ENCODE measurements at regions of chr11 and their contacts with region 1.

Region 1: GRCh38 chr11:102293873-102294601 is 23.2 kb upstream of the BIRC3 start:
- DNase-seq: peak; percentile 64
- CTCF ChIP-seq: peak; percentile 81

Region 2: DNA sequence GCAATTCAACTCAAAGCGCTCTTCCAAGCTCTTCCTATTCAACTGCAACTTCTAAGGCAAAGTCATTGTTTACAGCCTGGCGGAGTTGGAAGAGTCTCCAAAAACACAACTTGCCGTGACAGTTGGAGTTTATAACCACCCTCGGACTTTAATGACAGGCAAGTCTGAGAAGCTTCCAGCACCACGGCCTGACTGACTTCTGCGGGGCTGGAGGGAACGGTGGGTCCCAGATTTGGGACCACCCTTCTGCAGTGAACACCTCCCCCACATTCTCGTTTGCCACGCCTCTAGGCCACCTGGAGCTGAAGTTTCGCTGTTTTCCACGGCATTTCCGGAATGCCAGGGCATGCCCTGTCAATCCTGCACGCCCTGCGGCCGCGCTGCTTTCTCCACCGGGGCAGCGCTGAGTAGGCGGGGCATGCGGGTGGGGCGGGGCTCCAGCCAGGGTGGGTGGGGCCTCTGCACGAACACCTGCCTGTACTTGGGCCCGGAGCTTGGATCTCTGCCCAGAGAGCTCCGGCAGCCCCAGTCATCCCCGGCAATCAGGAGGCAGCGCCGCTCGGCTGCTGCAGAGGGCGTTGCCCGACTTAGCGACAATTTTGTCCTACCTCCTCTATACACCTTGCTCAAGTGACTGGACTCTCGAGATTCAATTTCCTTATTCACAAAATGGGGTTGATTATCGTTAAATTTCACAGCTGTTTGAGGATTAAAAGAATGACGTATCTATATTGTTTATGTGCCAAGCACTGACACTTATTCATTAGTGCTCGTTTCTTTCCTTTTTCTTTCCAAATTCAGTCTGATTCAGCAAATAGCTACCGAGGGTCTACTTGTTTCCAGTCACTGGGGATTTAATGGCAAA is 25.5 kb before region 1 on chr11:
- CTCF ChIA-PET with region 1: interaction called, 26 read pairs
- POLR2A ChIA-PET with region 1: no interaction called
- DNase-seq: peak; percentile 91
- CTCF ChIP-seq: peak; percentile 51

Region 3: DNA sequence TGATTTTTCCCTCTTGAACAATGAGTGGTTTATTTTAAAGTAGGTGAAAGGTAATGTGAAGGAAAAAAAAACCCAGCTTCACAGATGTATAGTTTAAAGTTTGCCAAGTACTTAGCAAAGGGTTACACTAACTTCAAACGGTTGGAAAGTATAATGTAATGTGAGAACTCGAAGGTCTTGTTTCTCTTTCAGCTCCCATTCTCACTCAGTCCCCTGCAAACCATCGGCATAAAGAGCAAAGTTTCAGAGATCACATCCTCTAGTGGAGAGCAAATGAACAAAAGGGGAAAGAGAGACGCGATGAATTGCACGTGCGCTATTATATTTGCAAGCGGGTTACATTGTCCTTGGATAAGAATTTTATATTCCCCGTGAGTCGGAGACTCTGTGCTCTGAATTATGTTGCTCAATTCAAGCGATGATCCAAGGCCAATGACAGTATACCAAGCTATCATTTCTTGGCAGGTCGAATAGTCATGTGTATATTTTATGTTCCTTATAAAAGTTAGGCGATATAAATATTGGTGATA is 14.3 kb before region 1 on chr11:
- CTCF ChIA-PET with region 1: interaction called, 25 read pairs
- POLR2A ChIA-PET with region 1: no interaction called
- DNase-seq: peak; percentile 60
- CTCF ChIP-seq: peak; percentile 0

Region 4: GRCh38 chr11:102306048-102306585 is 12.1 kb after region 1 on chr11:
- CTCF ChIA-PET with region 1: interaction called, 90 read pairs
- POLR2A ChIA-PET with region 1: no interaction called
- DNase-seq: no peak
- CTCF ChIP-seq: no peak

Region 5: DNA sequence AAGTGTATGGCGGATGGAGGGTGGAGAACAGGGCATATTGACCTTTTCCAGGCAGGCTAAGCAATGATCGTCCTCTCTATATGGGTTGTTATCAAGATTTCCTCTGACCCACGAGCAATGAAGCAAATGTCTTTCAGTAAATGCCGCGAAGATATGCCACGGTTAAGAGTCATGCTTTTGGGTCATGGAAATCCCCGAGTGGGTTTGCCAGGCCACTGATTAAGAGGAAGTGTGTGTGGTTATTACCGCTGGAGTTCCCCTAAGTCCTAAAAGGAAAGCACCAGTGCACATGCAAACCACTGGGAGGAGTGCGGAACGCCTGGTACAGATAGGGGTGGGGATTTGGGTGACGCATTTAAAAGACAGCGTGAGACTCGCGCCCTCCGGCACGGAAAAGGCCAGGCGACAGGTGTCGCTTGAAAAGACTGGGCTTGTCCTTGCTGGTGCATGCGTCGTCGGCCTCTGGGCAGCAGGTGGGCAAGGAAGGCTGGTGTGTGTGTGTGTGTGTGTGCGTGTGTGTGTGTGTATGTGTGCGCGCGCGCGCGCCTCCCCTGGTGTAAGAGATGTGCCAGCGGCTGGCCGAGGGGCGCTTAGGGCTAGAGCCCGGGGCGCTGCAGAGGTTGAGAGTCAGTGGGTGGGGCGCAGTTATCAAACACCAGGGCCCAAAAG is 23.2 kb after region 1 on chr11 and contains the start of gene BIRC3:
- CTCF ChIA-PET with region 1: interaction called, 90 read pairs
- POLR2A ChIA-PET with region 1: no interaction called
- DNase-seq: peak; percentile 84
- CTCF ChIP-seq: peak; percentile 8

Region 6: DNA sequence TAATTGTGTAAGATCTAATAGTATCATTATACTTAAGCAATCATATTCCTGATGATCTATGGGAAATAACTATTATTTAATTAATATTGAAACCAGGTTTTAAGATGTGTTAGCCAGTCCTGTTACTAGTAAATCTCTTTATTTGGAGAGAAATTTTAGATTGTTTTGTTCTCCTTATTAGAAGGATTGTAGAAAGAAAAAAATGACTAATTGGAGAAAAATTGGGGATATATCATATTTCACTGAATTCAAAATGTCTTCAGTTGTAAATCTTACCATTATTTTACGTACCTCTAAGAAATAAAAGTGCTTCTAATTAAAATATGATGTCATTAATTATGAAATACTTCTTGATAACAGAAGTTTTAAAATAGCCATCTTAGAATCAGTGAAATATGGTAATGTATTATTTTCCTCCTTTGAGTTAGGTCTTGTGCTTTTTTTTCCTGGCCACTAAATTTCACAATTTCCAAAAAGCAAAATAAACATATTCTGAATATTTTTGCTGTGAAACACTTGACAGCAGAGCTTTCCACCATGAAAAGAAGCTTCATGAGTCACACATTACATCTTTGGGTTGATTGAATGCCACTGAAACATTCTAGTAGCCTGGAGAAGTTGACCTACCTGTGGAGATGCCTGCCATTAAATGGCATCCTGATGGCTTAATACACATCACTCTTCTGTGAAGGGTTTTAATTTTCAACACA is 29.7 kb after region 1 on chr11:
- CTCF ChIA-PET with region 1: interaction called, 90 read pairs
- POLR2A ChIA-PET with region 1: no interaction called
- DNase-seq: no peak
- CTCF ChIP-seq: no peak

Region 7: DNA sequence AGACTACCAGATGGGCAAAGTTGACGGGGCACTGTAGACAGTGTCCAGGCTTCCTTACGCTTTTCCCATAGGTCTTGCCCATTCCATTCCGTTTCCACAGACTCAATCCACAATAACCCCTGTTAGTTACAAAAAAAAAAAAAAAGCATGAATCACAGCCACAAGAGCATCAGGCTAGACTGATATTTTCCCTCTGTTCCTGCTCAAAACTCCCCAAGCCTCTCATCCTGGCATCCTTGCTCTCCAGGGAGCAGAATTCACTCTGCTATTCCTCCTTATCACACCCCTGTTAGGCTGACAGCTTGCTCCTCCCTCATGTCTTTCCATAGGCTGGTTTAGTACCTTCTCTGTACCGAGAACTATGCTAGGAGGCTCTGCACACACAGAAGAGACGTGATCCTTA is 116.3 kb after region 1 on chr11:
- CTCF ChIA-PET with region 1: no interaction called
- POLR2A ChIA-PET with region 1: no interaction called
- DNase-seq: no peak
- CTCF ChIP-seq: no peak

Region 8: DNA sequence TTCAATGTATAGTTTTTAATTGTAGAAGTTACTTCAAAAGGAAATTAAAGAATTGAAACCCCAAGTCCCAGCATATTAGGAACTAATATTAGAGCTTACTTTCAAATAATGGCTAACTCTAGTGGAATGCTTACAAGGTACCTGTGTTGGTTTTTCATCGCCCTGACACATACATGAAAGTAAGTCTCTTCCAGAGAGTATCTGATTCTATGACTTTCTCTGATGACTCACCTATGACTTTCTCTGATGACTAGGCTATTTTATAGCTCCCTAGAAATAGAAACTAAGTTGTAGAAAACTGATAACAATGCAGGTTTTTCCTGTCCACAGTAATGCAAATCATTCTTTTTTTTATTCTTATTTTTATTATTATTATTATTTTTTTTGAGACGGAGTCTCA is 270.1 kb after region 1 on chr11:
- CTCF ChIA-PET with region 1: no interaction called
- POLR2A ChIA-PET with region 1: no interaction called
- DNase-seq: peak; percentile 59
- CTCF ChIP-seq: no peak

Region 9: GRCh38 chr11:102666331-102666957 is 372.4 kb after region 1 on chr11:
- CTCF ChIA-PET with region 1: interaction called, 71 read pairs
- POLR2A ChIA-PET with region 1: no interaction called
- DNase-seq: peak; percentile 50
- CTCF ChIP-seq: peak; percentile 85

Measured in GM10248 (cell line).